ENCODE measurements at regions of chr20 and their contacts with region 1.

Region 1: DNA sequence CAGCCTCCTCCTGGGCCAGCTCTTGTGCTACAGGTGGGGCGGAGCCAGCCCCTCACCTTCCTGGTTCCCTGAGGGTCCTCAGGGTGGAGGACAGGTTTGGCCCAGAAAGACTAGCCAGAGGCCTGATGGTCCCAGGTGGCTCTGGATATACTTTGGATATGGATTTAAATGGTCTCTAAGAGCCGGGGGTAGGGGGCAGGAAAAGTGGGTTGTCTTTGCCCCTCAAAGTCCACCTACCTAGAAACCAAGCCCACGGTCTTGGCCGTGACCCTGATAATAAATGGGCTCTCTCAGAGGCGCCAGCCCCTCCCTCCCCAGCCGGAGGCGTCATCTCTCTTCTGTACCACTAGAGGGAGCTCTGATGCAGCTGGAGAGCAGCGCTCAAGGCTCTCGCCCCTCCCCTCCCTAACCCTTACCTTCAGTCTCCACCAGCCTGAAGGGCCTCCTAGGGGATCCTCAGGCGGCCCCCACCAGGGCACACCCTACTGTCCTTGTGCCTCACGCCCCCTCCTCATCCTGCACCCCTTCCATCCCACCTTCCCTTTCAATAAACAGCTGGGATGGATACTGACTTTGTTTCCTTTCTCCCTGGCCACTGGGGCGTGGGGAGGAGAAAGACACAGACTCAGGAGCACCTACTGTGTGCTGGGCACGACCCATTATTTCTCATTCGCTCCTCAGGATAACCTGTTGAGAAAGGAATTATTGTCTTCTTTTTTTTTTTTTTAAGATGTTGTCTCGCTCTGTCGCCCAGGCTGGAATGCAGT is 7.6 kb downstream of the NRSN2 start:
- DNase-seq: peak; percentile 87
- ATAC-seq: peak; percentile 92
- H3K4me3 ChIP-seq: no peak overlapping the region
- H3K27ac ChIP-seq: no peak overlapping the region
- H3K4me1 ChIP-seq: peaks cover 14% of the 10 kb centered on the region
- H3K27me3 ChIP-seq: no peaks in the 10 kb centered on the region
- CTCF ChIP-seq: peak; percentile 99
- EP300 ChIP-seq: no peak
- POLR2A ChIP-seq: peak in 1 of 2 experiments; percentile 27; a peak in 1 of 4 replicates
- RAD21 ChIP-seq: peak; percentile 100

Region 2: DNA sequence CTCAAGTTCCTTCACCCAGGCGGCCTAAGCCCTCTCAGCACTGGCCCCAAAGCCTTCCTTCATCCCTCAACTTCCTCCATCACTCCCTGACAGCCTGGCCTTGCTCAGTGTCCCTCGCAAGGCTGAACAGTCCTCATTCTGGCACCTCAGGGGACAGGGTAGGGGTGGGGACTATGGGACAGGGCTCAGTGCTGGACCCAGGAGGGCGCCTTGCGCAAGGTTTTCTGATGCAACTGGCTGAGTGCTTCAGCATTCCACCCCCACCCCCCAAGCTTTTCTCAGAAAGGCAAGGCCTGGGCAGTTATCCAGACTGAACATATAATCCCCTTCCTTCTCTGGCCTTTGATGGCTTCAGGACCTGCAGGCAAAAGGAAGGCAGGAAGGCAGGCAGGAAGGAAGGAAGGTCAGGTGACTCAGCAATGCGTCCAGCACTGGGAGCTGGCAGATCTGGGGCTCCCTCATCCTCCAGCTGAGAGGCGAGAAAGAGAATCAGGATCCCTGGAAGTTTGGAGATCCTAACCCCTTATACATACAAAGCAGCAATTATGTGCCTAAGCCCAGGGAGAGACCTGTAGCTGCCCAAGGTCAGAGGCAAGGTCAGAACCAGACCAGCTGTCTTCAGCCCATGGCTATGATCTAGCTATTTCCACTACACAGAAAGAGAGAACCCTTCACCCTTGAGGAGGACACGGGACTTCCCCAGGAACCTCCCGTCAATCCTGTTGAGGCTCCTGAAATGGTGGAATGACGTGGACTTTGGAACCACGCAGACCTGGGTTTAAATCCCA is 17.5 kb after region 1 on chr20:
- CTCF ChIA-PET with region 1: no interaction called
- POLR2A ChIA-PET with region 1: interaction called, 1,587 read pairs
- in situ Hi-C with region 1: no loop called
- intact Hi-C with region 1: no loop called
- DNase-seq: peak; percentile 99
- ATAC-seq: peak; percentile 88
- H3K4me3 ChIP-seq: peak overlapping the region; percentile 1 to 58 (median 5); a peak in 5 of 6 replicates
- H3K27ac ChIP-seq: peak overlapping the region; percentile 88
- H3K4me1 ChIP-seq: peaks cover 69% of the 10 kb centered on the region
- H3K27me3 ChIP-seq: no peaks in the 10 kb centered on the region
- CTCF ChIP-seq: peak; percentile 66
- EP300 ChIP-seq: peak; percentile 98 to 99
- POLR2A ChIP-seq: peak; percentile 64 to 69
- RAD21 ChIP-seq: peak; percentile 81

Region 3: DNA sequence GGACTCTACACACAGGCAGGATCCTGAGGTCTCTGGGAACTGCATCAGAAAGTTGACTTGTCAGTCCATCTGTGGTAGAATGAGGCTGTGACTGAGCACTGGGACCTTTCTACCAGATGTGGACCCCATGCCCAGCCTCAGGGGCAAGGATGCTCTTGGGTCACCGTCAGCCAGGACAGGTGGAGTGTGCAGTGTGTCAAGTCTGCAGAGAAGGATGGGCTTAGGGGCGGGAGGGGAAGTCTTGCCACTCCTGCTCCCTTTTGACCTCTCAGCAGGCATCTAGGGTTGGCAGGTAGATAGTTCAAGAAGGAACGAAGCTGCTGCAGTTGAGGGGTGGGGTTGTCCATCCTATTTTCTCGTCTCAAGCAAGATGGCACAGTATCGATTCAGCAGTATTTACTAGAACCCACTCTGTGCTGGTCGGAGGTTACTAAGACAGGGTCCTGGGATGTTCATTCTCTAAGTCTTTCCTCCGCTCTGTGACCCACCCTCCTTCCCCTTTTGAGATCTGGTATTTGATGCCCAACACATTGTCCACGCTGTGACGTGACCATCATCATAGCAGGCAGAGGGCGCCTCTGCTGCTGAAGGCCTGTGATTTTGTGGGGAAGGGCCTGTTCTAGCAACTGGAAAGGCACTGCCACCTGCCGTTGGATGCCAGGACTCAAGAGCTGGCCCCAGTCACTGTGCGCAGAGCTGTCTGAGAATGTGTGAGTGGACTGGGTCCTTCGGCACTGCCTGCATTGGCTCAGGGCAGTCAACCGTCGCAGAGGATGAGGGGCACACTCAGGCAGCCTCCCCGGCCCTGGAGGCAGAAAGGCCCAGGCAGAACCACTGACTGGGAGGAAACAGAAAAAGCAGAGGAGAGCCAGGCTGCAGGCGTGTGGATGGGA is 76.8 kb after region 1 on chr20:
- CTCF ChIA-PET with region 1: interaction called, 106 read pairs
- POLR2A ChIA-PET with region 1: interaction called, 9 read pairs
- in situ Hi-C with region 1: loop called (anchors 5 kb)
- intact Hi-C with region 1: loop called (anchors 1 kb)
- DNase-seq: peak; percentile 93
- ATAC-seq: peak; percentile 84
- H3K4me3 ChIP-seq: no peak overlapping the region
- H3K27ac ChIP-seq: no peak overlapping the region
- H3K4me1 ChIP-seq: 0 out of 2 replicates have a peak, but pooled peaks cover 7% of the 10 kb centered on the region
- H3K27me3 ChIP-seq: no peaks in the 10 kb centered on the region
- CTCF ChIP-seq: peak; percentile 99
- EP300 ChIP-seq: no peak; a peak in 1 of 4 replicates
- POLR2A ChIP-seq: peak in 1 of 2 experiments; percentile 62; a peak in 3 of 4 replicates
- RAD21 ChIP-seq: peak; percentile 100

Region 4: DNA sequence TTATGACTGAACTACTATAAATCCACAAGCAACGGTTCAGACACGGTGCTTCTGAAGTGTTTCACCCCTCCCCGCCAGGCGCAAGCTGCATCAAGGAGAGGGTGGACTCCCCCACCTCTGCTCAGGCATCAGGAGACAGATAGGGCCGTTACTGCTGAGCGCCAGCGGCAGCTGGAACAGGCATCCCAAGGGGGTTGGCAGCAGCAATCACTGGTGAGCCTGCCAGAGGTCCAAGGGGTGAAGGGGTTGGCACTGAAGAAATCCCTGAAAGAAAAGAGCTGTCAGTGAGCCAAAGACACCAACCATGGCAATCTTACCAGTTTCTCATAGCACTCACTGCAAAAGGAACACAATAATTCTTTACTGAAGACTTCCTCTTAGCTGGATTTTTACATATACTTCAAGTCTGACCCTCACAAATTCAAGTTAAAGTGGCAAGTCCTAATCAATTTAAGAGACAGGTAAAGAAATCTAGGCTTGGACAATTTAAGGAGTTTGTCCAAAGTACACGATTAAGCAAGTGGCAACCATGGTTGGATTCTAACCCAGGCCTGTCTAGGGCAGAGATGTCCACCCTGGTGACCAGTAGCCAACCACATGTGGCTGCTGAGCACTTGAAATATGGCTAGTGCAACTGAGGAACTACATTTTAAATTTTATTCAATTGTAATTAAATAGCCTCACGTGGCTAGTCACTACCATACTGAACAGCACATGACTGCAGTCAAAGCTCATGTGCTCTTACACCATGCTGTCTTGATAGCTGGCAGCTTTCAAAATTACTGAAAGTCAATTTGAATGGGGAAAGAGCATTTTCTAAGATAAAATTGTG is 129.5 kb after region 1 on chr20:
- CTCF ChIA-PET with region 1: interaction called, 19 read pairs
- POLR2A ChIA-PET with region 1: interaction called, 3 read pairs
- in situ Hi-C with region 1: loop called (anchors 5 kb)
- intact Hi-C with region 1: loop called (anchors 1 kb)
- DNase-seq: no peak
- ATAC-seq: no peak
- H3K4me3 ChIP-seq: no peak overlapping the region
- H3K27ac ChIP-seq: no peak overlapping the region
- H3K4me1 ChIP-seq: peaks cover 26% of the 10 kb centered on the region
- H3K27me3 ChIP-seq: no peaks in the 10 kb centered on the region
- CTCF ChIP-seq: no peak
- EP300 ChIP-seq: no peak
- POLR2A ChIP-seq: no peak
- RAD21 ChIP-seq: no peak

Region 5: GRCh38 chr20:645318-646106 is 291.0 kb after region 1 on chr20:
- CTCF ChIA-PET with region 1: no interaction called
- POLR2A ChIA-PET with region 1: interaction called, 3 read pairs
- in situ Hi-C with region 1: loop called (anchors 10 kb)
- intact Hi-C with region 1: no loop called
- DNase-seq: peak; percentile 90
- ATAC-seq: peak; percentile 78
- H3K4me3 ChIP-seq: peak overlapping the region; percentile 15 to 71 (median 58)
- H3K27ac ChIP-seq: peak overlapping the region; percentile 86
- H3K4me1 ChIP-seq: peaks cover 49% of the 10 kb centered on the region
- H3K27me3 ChIP-seq: no peaks in the 10 kb centered on the region
- CTCF ChIP-seq: peak; percentile 100
- EP300 ChIP-seq: peak; percentile 32 to 53; a peak in 2 of 4 replicates
- POLR2A ChIP-seq: peak; percentile 43 to 53; a peak in 2 of 4 replicates
- RAD21 ChIP-seq: peak; percentile 99

Region 6: GRCh38 chr20:825710-826421 is 471.4 kb after region 1 on chr20:
- CTCF ChIA-PET with region 1: no interaction called
- POLR2A ChIA-PET with region 1: no interaction called
- in situ Hi-C with region 1: no loop called
- intact Hi-C with region 1: no loop called
- DNase-seq: no peak
- ATAC-seq: peak; percentile 29; the same call in 2 of the 3 replicates
- H3K4me3 ChIP-seq: no peak overlapping the region
- H3K27ac ChIP-seq: no peak overlapping the region
- H3K4me1 ChIP-seq: 0 out of 2 replicates have a peak, but pooled peaks cover 7% of the 10 kb centered on the region
- H3K27me3 ChIP-seq: peaks cover 0 to 6% of the 10 kb centered on the region in 2 experiments; a peak in 2 of 5 replicates
- CTCF ChIP-seq: no peak
- EP300 ChIP-seq: no peak
- POLR2A ChIP-seq: no peak
- RAD21 ChIP-seq: no peak

Measured in HepG2 (cell line).